MCF 10A (cell line): ENCODE measurements at regions of chr14 and their contacts with region 1.

Region 1: GRCh38 chr14:60980811-60981632 is at the starts of genes SLC38A6 and TRMT5:
- DNase-seq: peak; percentile 95
- H3K4me3 Mint-ChIP-seq: no peak within 1 kb of the TSS
- H3K27ac Mint-ChIP-seq: no peak within 1 kb of the TSS
- H3K4me1 Mint-ChIP-seq: peaks cover 16% of the 10 kb centered on the region
- H3K27me3 Mint-ChIP-seq: no peaks in the 10 kb centered on the region
- CTCF ChIP-seq: no peak
- total RNA-seq, gene SLC38A6: 7.9 and 12.6 TPM in 2 replicates
- total RNA-seq, gene TRMT5: 15.7 and 17.5 TPM in 2 replicates

Region 2: DNA sequence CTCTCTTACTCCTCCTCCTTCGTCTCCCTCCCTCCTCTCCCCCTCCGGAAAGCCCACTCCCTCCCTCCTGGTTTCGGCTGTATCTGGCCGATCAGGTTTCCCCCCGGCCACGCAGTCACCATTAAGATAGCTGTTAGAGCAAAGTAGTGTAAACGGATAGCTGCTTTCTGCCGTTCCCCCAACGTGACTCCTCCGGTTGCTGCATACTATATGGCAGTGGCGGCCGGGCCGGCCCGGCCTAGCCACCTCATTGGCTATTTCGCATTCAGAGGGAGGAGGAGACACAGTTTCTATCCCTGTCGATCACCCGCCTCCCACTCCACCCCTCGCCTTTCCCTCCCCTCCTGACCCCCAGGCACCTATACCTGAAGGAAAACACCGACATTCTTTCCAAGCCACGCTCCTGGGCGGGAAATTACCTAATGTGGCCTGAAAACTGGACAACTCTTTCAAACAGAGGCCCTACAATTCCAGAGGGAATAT is 256.8 kb before region 1 on chr14 and contains the start of gene SIX4:
- CTCF ChIA-PET with region 1: interaction called, 4 read pairs
- POLR2A ChIA-PET with region 1: interaction called, 45 read pairs
- intact Hi-C with region 1: loop called (anchors 2 kb)
- DNase-seq: peak; percentile 89
- H3K4me3 Mint-ChIP-seq: peak within 1 kb of the TSS; percentile 91
- H3K27ac Mint-ChIP-seq: peak within 1 kb of the TSS; percentile 80
- H3K4me1 Mint-ChIP-seq: no peaks in the 10 kb centered on the region
- H3K27me3 Mint-ChIP-seq: no peaks in the 10 kb centered on the region
- CTCF ChIP-seq: no peak
- total RNA-seq, gene SIX4: 12.9 and 13.6 TPM in 2 replicates

Region 3: DNA sequence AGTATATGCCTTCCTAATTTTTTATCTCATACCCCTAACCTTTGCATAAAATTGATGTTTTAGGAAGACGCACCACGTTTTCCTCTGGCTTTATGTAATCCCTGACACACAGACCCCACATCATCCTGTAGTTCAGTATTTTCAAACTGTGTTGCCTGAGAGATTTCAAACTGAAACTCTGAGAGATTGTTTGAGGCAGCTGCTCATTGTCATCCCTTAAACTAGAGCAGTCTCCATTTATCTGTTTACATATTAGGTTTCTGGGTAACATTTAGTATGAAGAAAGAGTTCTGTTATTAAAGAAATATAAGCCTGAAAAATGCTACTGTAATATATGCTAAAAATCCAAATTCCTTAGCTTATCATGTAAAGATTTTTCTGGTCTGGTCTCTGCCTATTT is 222.1 kb before region 1 on chr14:
- CTCF ChIA-PET with region 1: no interaction called
- POLR2A ChIA-PET with region 1: interaction called, 11 read pairs
- intact Hi-C with region 1: no loop called
- DNase-seq: no peak
- H3K4me3 Mint-ChIP-seq: no peak overlapping the region
- H3K27ac Mint-ChIP-seq: peak overlapping the region; percentile 94
- H3K4me1 Mint-ChIP-seq: peaks cover 47% of the 10 kb centered on the region
- H3K27me3 Mint-ChIP-seq: no peaks in the 10 kb centered on the region
- CTCF ChIP-seq: no peak

Region 4: DNA sequence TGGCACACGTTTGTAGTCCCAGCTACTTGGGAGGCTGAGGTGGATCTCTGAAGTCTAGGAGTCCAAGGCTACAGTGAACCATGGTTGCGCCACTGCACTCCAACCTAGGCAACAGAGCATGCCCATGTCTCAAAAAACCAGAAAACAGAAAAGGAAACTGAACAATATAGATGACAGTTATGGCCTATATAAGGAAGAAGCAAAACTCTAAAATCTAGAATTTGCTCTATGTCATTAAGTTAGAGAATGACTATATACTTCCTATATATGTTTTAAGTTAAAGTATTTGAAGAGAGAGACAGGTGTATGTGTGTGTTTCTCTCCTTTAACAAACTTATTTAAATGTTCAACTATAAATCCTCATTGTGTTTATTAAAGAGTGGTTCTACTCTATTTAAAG is 180.6 kb before region 1 on chr14:
- CTCF ChIA-PET with region 1: no interaction called
- POLR2A ChIA-PET with region 1: no interaction called
- intact Hi-C with region 1: no loop called
- DNase-seq: no peak
- H3K4me3 Mint-ChIP-seq: no peak overlapping the region
- H3K27ac Mint-ChIP-seq: no peak overlapping the region
- H3K4me1 Mint-ChIP-seq: peaks cover 3% of the 10 kb centered on the region
- H3K27me3 Mint-ChIP-seq: no peaks in the 10 kb centered on the region
- CTCF ChIP-seq: no peak

Region 5: DNA sequence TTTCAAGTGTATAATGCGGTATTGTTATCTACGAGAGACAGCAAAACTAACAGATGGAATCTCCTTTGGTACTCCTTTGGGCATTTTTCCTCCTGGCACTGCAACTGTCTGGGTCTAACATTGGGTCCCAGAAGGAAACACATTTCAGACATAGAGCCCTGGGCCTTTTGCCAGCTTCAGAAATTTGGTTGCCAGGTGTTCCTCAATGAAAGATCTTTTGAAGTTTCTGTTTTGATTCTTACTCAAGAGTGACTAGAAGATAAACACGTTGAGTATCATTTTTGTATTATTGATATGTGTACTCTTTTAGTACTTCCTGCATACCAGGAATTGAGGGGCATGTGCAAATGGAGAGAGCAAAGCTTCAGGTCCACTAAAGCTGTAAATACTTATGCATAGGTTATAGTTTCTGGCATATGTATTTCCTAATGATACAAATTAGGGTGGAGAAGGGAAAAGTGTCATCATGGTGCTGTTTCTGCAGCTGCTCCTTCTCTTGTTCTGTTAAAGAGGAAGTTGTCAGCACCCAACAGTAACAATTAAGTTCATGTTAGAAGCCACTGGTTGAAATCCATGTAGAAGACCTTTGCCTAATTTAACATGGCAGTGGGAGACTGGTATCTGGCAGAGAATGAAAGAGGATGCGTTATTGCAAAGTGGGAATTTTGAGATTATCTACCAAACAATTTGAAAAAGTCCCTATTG is 53.5 kb after region 1 on chr14:
- CTCF ChIA-PET with region 1: no interaction called
- POLR2A ChIA-PET with region 1: no interaction called
- intact Hi-C with region 1: no loop called
- DNase-seq: peak; percentile 8
- H3K4me3 Mint-ChIP-seq: no peak overlapping the region
- H3K27ac Mint-ChIP-seq: peak overlapping the region; percentile 71
- H3K4me1 Mint-ChIP-seq: peaks cover 9% of the 10 kb centered on the region
- H3K27me3 Mint-ChIP-seq: no peaks in the 10 kb centered on the region
- CTCF ChIP-seq: no peak

Region 6: GRCh38 chr14:61111209-61111665 is 130.2 kb after region 1 on chr14:
- CTCF ChIA-PET with region 1: no interaction called
- POLR2A ChIA-PET with region 1: no interaction called
- intact Hi-C with region 1: no loop called
- DNase-seq: no peak
- H3K4me3 Mint-ChIP-seq: no peak overlapping the region
- H3K27ac Mint-ChIP-seq: no peak overlapping the region
- H3K4me1 Mint-ChIP-seq: peaks cover 13% of the 10 kb centered on the region
- H3K27me3 Mint-ChIP-seq: no peaks in the 10 kb centered on the region
- CTCF ChIP-seq: no peak

Region 7: DNA sequence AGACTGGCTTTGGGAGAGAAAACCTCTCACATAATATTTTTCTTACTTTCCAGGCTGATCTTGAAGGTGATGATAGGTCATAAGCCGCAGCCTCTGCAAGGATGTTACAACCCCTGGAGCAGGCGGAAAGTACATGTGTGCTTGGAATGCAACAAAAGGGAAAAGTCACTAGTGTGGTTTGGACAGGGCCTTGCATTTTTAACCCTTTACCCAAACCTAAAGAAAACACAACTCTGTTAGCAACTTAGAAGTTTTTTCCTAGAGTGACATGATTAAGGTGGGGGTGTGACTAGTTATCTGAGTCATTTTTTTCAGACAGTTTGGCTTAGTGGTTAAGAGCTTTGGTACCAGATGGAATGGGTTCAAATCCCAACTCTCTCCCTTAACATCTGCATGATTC is 203.1 kb after region 1 on chr14:
- CTCF ChIA-PET with region 1: interaction called, 3 read pairs
- POLR2A ChIA-PET with region 1: interaction called, 3 read pairs
- intact Hi-C with region 1: loop called (anchors 5 kb)
- DNase-seq: peak; percentile 81
- H3K4me3 Mint-ChIP-seq: no peak overlapping the region
- H3K27ac Mint-ChIP-seq: peak overlapping the region; percentile 32
- H3K4me1 Mint-ChIP-seq: peaks cover 15% of the 10 kb centered on the region
- H3K27me3 Mint-ChIP-seq: no peaks in the 10 kb centered on the region
- CTCF ChIP-seq: no peak